Naive thymus-derived CD4-positive, alpha-beta T cell (primary cell): ENCODE measurements at regions of chr5 and their contacts with region 1.

Region 1: GRCh38 chr5:132500931-132501630 is 10.5 kb upstream of the IRF1 start:
- DNase-seq: peak; percentile 52 to 85 (median 76)
- ATAC-seq: peak; percentile 52
- H3K4me3 ChIP-seq: no peak overlapping the region
- H3K4me3 Mint-ChIP-seq: peak overlapping the region in 1 of 10 donors; percentile 48
- H3K27ac ChIP-seq: peak overlapping the region; percentile 99
- H3K27ac Mint-ChIP-seq: peak overlapping the region in 8 of 9 donors; percentile 26 to 98 (median 82)
- H3K4me1 ChIP-seq: peaks cover 12 to 21% of the 10 kb centered on the region in 2 donors
- H3K4me1 Mint-ChIP-seq: peaks cover 6 to 48% (median 31%) of the 10 kb centered on the region in 7 donors
- H3K27me3 ChIP-seq: no peaks in the 10 kb centered on the region
- H3K27me3 Mint-ChIP-seq: peaks cover 0 to 5% (median 0%) of the 10 kb centered on the region in 5 donors

Region 2: GRCh38 chr5:132238169-132238744 is 262.8 kb before region 1 on chr5:
- CTCF ChIA-PET with region 1: interaction called, 9 read pairs
- POLR2A ChIA-PET with region 1: no interaction called
- intact Hi-C with region 1: loop called in 1 of 2 experiments (anchors 10 kb)
- DNase-seq: peak in 8 of 9 donors; percentile 34 to 76 (median 44)
- ATAC-seq: peak; percentile 70
- H3K4me3 ChIP-seq: no peak overlapping the region
- H3K4me3 Mint-ChIP-seq: no peak overlapping the region
- H3K27ac ChIP-seq: no peak overlapping the region
- H3K27ac Mint-ChIP-seq: no peak overlapping the region
- H3K4me1 ChIP-seq: no peaks in the 10 kb centered on the region
- H3K4me1 Mint-ChIP-seq: peaks cover 0 to 2% (median 0%) of the 10 kb centered on the region in 7 donors
- H3K27me3 ChIP-seq: no peaks in the 10 kb centered on the region
- H3K27me3 Mint-ChIP-seq: peaks cover 0 to 21% (median 4%) of the 10 kb centered on the region in 5 donors

Region 3: GRCh38 chr5:132272311-132273210 is 228.5 kb before region 1 on chr5:
- CTCF ChIA-PET with region 1: no interaction called
- POLR2A ChIA-PET with region 1: no interaction called
- intact Hi-C with region 1: loop called in 1 of 2 experiments (anchors 2 kb)
- DNase-seq: peak; percentile 21 to 72 (median 49)
- ATAC-seq: peak; percentile 42
- H3K4me3 ChIP-seq: no peak overlapping the region
- H3K4me3 Mint-ChIP-seq: peak overlapping the region in 6 of 10 donors; percentile 25 to 80 (median 54)
- H3K27ac ChIP-seq: no peak overlapping the region
- H3K27ac Mint-ChIP-seq: peak overlapping the region in 1 of 9 donors; percentile 52
- H3K4me1 ChIP-seq: peaks cover 0 to 4% of the 10 kb centered on the region in 2 donors
- H3K4me1 Mint-ChIP-seq: peaks cover 0 to 16% (median 12%) of the 10 kb centered on the region in 7 donors
- H3K27me3 ChIP-seq: no peaks in the 10 kb centered on the region
- H3K27me3 Mint-ChIP-seq: peaks cover 10 to 31% (median 14%) of the 10 kb centered on the region in 5 donors

Region 4: DNA sequence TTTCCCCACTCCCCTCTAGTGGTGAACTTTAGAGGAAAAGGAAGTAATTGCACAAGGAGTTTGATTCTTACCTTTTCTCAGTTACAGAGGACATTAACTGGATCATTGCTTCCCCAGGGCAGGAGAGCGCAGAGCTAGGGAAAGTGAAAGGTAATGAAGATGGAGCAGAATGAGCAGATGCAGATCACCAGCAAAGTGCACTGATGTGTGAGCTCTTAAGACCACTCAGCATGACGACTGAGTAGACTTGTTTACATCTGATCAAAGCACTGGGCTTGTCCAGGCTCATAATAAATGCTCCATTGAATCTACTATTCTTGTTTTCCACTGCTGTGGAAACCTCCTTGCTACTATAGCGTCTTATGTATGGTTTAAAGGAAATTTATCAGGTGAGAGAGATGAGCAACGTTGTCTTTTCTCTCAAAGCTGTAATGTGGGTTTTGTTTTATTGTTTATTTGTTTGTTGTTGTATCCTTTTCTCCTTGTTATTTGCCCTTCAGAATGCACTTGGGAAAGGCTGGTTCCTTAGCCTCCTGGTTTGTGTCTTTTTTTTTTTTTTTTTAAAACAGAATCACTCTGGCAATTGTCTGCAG is 106.3 kb before region 1 on chr5:
- CTCF ChIA-PET with region 1: interaction called, 243 read pairs
- POLR2A ChIA-PET with region 1: interaction called, 122 read pairs
- intact Hi-C with region 1: no loop called
- DNase-seq: no peak
- ATAC-seq: no peak
- H3K4me3 ChIP-seq: no peak overlapping the region
- H3K4me3 Mint-ChIP-seq: peak overlapping the region in 6 of 10 donors; percentile 6 to 73 (median 34)
- H3K27ac ChIP-seq: peak overlapping the region; percentile 35
- H3K27ac Mint-ChIP-seq: peak overlapping the region in 8 of 9 donors; percentile 68 to 94 (median 87)
- H3K4me1 ChIP-seq: peaks cover 19 to 65% of the 10 kb centered on the region in 2 donors
- H3K4me1 Mint-ChIP-seq: peaks cover 48 to 94% (median 82%) of the 10 kb centered on the region in 7 donors
- H3K27me3 ChIP-seq: no peaks in the 10 kb centered on the region
- H3K27me3 Mint-ChIP-seq: peaks cover 0 to 10% (median 0%) of the 10 kb centered on the region in 5 donors

Region 5: DNA sequence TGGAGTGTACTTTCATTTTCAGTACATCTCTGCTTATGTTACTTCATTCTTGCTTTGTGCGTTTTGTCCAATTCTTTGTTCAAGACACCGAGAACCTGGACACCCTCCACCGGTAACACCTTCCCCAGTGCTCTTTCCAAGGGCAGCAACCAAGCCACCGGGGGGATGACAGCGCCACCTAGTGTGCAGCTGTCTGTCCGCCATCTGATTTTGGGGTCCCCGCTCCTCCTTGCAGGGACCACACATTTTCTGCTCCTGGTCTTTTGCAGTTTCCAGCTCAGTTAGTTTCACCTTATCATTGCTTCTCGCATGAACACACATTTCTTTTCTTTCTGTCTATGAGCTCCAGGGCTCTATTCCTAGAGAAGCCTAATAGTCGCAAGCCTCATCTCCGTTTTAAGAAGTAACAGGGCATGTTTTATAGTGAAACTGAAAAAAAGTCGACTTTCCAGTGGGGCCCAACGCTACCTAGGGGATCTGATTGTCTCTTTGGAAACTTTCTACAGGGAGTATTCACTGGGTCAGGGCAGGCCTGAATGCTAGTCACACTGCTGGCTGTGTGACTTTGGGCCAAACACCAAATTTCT is 959.2 kb after region 1 on chr5:
- CTCF ChIA-PET with region 1: no interaction called
- POLR2A ChIA-PET with region 1: no interaction called
- intact Hi-C with region 1: no loop called
- DNase-seq: peak in 3 of 9 donors; percentile 10 to 40 (median 20)
- ATAC-seq: peak; percentile 34
- H3K4me3 ChIP-seq: no peak overlapping the region
- H3K4me3 Mint-ChIP-seq: no peak overlapping the region
- H3K27ac ChIP-seq: no peak overlapping the region
- H3K27ac Mint-ChIP-seq: no peak overlapping the region
- H3K4me1 ChIP-seq: no peaks in the 10 kb centered on the region
- H3K4me1 Mint-ChIP-seq: peaks cover 0 to 7% (median 4%) of the 10 kb centered on the region in 7 donors
- H3K27me3 ChIP-seq: peaks cover 0 to 3% of the 10 kb centered on the region in 2 donors
- H3K27me3 Mint-ChIP-seq: no peaks in the 10 kb centered on the region